Naive thymus-derived CD4-positive, alpha-beta T cell (primary cell): ENCODE measurements at regions of chr6 and their contacts with region 1.

Region 1: DNA sequence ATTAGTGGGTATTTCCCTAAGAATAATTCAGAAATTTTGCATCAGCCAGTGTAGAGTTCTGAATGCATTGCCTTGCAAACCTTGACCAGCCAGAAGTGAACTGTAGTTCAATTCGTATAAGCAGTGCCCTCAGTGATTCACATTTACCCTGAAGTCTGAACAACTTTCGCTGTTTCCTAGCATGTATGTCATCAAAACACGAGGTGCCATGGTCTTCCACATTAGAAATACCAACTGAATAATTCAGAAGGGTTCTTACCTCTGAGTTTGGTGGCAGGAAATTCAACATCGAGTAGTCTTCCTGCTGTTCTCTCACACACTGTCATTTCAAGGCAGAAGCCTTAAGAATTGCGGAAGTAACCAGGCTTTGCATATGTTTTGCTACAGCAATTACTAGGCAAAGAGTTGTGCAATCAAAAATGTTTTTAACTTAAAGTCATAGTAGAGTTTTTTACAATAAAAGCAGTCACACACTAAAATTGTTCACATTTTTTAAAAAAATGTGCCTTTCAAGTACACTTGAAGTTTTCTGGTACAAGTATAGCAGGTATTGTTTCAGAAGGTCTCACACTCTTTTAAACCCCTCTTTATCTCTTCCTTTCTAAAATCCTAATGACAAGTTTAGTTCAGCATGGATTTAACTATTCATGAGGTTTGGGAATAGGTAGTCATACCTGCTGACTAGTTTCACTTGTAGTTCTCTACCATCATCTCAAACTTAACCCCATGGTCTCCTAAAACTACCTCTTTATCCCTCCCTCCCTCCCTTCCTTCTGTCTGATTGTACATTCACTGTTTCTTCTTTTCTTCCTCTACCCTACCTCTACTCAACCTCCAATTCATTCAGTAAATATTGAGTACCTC is 118.3 kb downstream of the STXBP5 start:
- DNase-seq: peak in 7 of 9 donors; percentile 23 to 61 (median 51)
- ATAC-seq: peak; percentile 93
- H3K4me3 ChIP-seq: no peak overlapping the region
- H3K4me3 Mint-ChIP-seq: peak overlapping the region; percentile 49 to 87 (median 77)
- H3K27ac ChIP-seq: peak overlapping the region; percentile 58
- H3K27ac Mint-ChIP-seq: peak overlapping the region; percentile 82 to 95 (median 93)
- H3K4me1 ChIP-seq: peaks cover 0 to 15% of the 10 kb centered on the region in 2 donors
- H3K4me1 Mint-ChIP-seq: peaks cover 11 to 44% (median 26%) of the 10 kb centered on the region in 7 donors
- H3K27me3 ChIP-seq: no peaks in the 10 kb centered on the region
- H3K27me3 Mint-ChIP-seq: no peaks in the 10 kb centered on the region

Region 2: DNA sequence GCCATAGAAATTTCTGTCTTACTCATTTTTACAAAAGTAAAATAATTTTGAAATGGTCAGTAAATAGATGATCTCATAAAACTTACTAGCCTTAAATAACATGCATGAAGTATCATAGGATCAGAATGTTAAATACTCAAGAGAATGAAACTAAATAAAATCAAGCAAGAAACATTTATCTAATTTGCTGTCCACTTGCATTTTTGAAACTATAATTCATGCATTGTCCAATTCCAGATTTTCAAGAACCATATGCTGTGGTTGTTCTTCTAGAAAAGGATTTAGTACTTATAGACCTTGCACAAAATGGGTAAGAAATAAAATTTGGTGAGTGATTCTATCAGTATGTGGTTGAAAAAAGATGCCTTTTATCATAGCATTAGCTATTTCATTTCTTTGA is 11.3 kb before region 1 on chr6:
- CTCF ChIA-PET with region 1: no interaction called
- POLR2A ChIA-PET with region 1: no interaction called
- intact Hi-C with region 1: loop called in 1 of 2 experiments (anchors 1 kb)
- DNase-seq: no peak
- ATAC-seq: no peak
- H3K4me3 ChIP-seq: no peak overlapping the region
- H3K4me3 Mint-ChIP-seq: no peak overlapping the region
- H3K27ac ChIP-seq: no peak overlapping the region
- H3K27ac Mint-ChIP-seq: peak overlapping the region in 1 of 9 donors; percentile 5
- H3K4me1 ChIP-seq: no peaks in the 10 kb centered on the region
- H3K4me1 Mint-ChIP-seq: peaks cover 0 to 5% (median 0%) of the 10 kb centered on the region in 7 donors
- H3K27me3 ChIP-seq: no peaks in the 10 kb centered on the region
- H3K27me3 Mint-ChIP-seq: no peaks in the 10 kb centered on the region